ENCODE measurements at regions of chr1 and their contacts with region 1.

Region 1: GRCh38 chr1:17606826-17607440 is 67.4 kb downstream of the ARHGEF10L start:
- DNase-seq: peak; percentile 74
- H3K4me3 ChIP-seq: no peak overlapping the region
- H3K27ac ChIP-seq: no peak overlapping the region
- H3K4me1 ChIP-seq: no peaks in the 10 kb centered on the region
- H3K27me3 ChIP-seq: no peaks in the 10 kb centered on the region
- CTCF ChIP-seq: peak; percentile 92

Region 2: GRCh38 chr1:17265162-17265561 is 341.8 kb before region 1 on chr1:
- CTCF ChIA-PET with region 1: no interaction called
- POLR2A ChIA-PET with region 1: no interaction called
- intact Hi-C with region 1: no loop called
- DNase-seq: no peak
- H3K4me3 ChIP-seq: no peak overlapping the region
- H3K27ac ChIP-seq: no peak overlapping the region
- H3K4me1 ChIP-seq: no peaks in the 10 kb centered on the region
- H3K27me3 ChIP-seq: no peaks in the 10 kb centered on the region
- CTCF ChIP-seq: no peak

Region 3: DNA sequence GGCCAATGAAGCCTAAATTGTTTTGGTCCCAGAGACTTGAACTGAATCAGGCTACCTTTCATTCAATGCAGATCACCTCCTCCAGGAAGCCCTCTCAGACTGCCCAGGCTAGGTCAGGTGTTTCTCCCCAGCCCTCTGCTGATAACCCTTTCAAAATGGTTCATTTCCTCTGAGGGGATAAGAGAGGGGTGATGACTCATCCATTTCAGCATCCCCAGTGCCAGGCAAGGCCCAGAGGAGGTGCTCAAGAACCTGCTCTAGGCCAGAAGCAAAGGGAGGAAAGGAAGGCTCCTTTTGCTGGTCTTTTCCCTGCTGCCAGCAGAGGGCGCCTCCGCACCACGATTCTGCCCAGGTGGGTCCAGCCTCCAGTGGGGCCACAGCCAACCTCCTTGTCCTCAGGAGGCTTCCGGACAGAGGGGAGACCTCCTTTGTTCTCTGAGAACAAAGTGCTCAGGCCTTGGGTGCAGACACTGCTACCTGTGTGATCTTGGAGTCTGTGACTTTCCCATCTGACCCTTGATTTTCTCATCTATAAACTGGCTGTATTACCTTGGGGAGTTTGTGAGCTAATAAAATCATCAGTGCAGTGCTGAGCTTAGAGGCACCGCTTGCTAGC is 112.7 kb before region 1 on chr1:
- CTCF ChIA-PET with region 1: interaction called, 11 read pairs
- POLR2A ChIA-PET with region 1: no interaction called
- intact Hi-C with region 1: loop called (anchors 2 kb)
- DNase-seq: peak; percentile 84
- H3K4me3 ChIP-seq: no peak overlapping the region
- H3K27ac ChIP-seq: no peak overlapping the region
- H3K4me1 ChIP-seq: no peaks in the 10 kb centered on the region
- H3K27me3 ChIP-seq: no peaks in the 10 kb centered on the region
- CTCF ChIP-seq: peak; percentile 96

Region 4: DNA sequence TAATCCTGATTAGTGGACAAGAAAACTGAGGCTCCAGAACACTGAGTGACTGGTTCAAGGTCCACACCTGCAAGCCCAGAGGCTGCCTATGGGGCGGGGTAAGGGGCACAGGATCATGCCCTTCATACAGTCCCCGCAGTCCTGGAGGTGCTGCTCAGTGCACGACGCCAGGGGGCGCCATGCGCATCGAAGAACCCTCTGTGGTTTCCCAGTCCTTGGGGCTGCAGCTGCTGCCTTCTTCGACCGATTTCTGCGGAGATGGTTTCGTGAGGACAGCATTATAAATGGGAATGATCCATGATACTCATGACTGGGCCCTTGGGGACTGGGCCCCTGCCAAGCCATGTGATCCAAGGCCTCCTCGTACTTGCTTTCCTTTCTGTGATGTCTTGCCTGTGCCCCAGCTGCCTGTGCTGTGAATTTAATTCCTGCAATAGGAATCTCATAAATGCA is 104.6 kb before region 1 on chr1:
- CTCF ChIA-PET with region 1: interaction called, 38 read pairs
- POLR2A ChIA-PET with region 1: no interaction called
- intact Hi-C with region 1: loop called (anchors 1 kb)
- DNase-seq: peak; percentile 75
- H3K4me3 ChIP-seq: no peak overlapping the region
- H3K27ac ChIP-seq: no peak overlapping the region
- H3K4me1 ChIP-seq: no peaks in the 10 kb centered on the region
- H3K27me3 ChIP-seq: no peaks in the 10 kb centered on the region
- CTCF ChIP-seq: peak; percentile 94

Measured in A673 (cell line).